T-cell (primary cell): ENCODE measurements at regions of chr4 and their contacts with region 1.

Region 1: DNA sequence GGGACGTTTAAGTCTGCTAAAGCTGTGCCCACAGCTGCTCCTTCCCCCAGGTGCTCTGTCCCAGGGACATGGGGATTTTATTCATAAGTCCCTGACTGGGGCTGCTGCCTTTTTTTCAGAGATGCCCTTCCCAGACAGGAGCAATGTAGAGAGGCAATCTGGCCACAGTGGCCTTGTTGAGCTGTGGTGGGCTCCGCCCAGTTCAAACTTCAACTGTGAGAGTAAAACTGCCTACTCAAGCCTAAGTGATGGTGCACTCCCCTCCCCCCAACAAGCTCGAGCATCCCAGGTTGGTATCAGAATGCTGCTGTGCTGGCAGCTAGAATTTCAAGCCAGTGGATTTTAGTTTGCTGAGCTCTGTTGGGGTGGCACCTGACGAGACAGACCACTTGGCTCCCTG is 1371.4 kb downstream of the ADGRL3 start:
- DNase-seq: no peak
- ATAC-seq: no peak
- H3K4me3 ChIP-seq: no peak overlapping the region
- H3K4me3 Mint-ChIP-seq: no peak overlapping the region
- H3K27ac ChIP-seq: no peak overlapping the region
- H3K27ac Mint-ChIP-seq: no peak overlapping the region
- H3K4me1 ChIP-seq: no peaks in the 10 kb centered on the region
- H3K4me1 Mint-ChIP-seq: no peaks in the 10 kb centered on the region
- H3K27me3 ChIP-seq: no peaks in the 10 kb centered on the region
- H3K27me3 Mint-ChIP-seq: no peaks in the 10 kb centered on the region

Region 2: DNA sequence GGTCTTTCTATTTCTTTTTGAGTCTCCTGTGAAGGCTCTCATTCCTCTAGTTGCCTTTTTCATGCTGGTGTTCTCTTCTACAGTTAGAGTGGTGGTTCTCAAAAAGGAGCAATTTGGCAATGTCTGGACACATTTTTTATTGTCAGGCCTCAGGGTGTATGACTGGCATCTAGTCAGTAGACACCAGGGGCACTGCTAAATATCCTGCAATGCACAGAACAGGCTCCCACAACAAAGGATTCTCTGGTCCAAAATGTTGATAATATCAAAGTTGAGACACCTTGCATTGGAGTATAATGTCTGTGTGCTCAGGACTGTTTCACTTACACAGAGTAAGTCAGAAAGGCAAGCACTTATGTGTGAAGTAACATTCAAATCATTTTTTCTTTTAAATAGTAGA is 10.6 kb before region 1 on chr4:
- CTCF ChIA-PET with region 1: no interaction called
- POLR2A ChIA-PET with region 1: interaction called in 1 of 2 experiments, 23 read pairs
- DNase-seq: no peak
- ATAC-seq: no peak
- H3K4me3 ChIP-seq: no peak overlapping the region
- H3K4me3 Mint-ChIP-seq: no peak overlapping the region
- H3K27ac ChIP-seq: no peak overlapping the region
- H3K27ac Mint-ChIP-seq: no peak overlapping the region
- H3K4me1 ChIP-seq: no peaks in the 10 kb centered on the region
- H3K4me1 Mint-ChIP-seq: no peaks in the 10 kb centered on the region
- H3K27me3 ChIP-seq: no peaks in the 10 kb centered on the region
- H3K27me3 Mint-ChIP-seq: no peaks in the 10 kb centered on the region